Psoas muscle (tissue), 8 donors: ENCODE measurements at regions of chr6 and their contacts with region 1.

Region 1: GRCh38 chr6:70706491-70707123 is 38.9 kb downstream of the SMAP1 start:
- DNase-seq: no peak
- ATAC-seq: peak in 1 of 4 donors; percentile 58
- H3K4me3 ChIP-seq: no peak overlapping the region
- H3K27ac ChIP-seq: no peak overlapping the region
- H3K4me1 ChIP-seq: peaks cover 12% of the 10 kb centered on the region
- H3K27me3 ChIP-seq: no peaks in the 10 kb centered on the region
- CTCF ChIP-seq: peak; percentile 74

Region 2: GRCh38 chr6:70753870-70754380 is 47.3 kb after region 1 on chr6:
- intact Hi-C with region 1: no loop called
- DNase-seq: no peak
- ATAC-seq: no peak
- H3K4me3 ChIP-seq: no peak overlapping the region
- H3K27ac ChIP-seq: no peak overlapping the region
- H3K4me1 ChIP-seq: no peaks in the 10 kb centered on the region
- H3K27me3 ChIP-seq: no peaks in the 10 kb centered on the region
- CTCF ChIP-seq: no peak

Region 3: DNA sequence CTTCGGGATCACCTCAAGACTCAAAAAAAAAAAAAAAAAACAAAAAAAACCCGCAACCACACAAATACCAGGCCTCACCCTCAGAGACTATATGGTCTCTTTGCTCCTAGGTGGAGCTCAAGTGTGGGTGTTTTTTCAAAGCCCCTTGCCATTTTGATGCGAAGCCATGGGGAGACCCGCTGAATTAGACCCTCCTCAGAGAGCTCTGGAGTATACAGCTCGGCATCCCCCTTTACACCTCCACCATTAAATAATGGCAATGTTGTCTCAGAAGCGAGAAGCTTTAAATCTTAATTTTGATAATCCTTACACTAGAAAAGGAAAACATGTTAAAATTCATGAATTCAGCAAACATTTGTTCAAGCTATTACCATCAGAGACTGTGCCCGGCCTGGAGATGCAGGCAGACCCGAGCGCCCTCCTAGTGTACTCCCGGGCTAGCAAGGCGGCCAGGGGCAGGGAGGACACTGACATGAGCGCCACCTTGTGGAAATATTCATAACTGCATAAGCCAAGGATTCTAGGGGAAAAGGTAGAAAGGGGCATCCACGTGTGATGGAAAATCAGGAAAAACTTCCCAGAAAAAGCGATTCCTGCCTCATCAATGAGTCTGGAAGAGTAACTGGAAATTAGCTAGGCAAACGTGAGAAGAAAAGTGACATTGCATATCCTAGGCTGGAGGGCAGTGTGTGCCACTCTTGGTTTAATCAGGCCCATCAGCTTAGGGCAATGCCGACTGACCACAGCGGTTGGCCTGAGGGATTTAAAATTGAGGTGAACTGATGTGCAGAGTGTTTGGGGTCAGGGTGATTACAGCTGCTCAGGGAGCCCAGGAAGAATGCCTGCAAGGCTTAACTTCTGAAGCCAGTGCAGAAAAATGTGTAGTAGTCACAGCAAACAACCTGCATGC is 177.7 kb after region 1 on chr6:
- intact Hi-C with region 1: loop called (anchors 2 kb)
- DNase-seq: peak; percentile 40 to 68
- ATAC-seq: peak; percentile 78 to 92 (median 89)
- H3K4me3 ChIP-seq: no peak overlapping the region
- H3K27ac ChIP-seq: no peak overlapping the region
- H3K4me1 ChIP-seq: peaks cover 7% of the 10 kb centered on the region
- H3K27me3 ChIP-seq: no peaks in the 10 kb centered on the region
- CTCF ChIP-seq: peak; percentile 95

Region 4: DNA sequence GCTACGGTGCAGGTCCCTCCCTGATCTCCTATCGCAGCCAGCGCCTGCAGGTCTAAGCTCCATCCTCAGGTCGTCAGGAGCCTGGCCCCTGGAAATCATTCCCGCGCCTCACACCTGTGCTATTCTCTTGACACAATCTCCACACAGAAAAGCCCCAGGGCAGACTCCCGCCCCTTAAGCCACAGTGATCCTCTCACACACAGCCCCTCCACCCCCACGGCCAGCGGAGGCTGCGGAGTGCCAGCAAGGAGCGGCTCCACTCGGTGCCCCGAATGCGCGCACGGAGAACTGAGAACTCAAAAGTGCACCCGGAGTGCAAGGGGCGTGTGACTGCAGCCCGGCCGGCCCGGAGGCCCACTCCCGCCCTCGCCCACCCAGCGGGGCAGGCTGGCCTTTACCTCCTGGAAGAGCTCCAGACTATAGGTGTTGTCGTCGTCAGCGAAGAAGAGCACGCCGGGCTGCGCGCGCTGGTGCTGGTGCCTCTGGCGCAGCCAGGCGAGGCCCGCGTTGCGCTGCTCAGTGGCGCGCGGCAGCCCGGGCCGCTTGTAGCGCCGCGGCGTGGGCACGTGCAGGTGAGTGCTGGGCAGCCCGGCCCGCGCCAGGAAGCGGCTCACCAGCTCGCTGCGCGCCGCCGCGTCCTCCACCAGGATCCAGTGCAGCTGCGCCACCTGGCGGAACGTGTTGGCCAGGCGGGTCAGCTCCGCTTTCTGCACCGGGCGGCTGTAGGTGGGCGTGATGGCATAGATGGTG is 249.0 kb after region 1 on chr6:
- intact Hi-C with region 1: loop called in 1 of 2 experiments (anchors 5 kb)
- DNase-seq: peak; percentile 84 to 90
- ATAC-seq: peak; percentile 95 to 98 (median 97)
- H3K4me3 ChIP-seq: peak overlapping the region; percentile 72
- H3K27ac ChIP-seq: no peak overlapping the region
- H3K4me1 ChIP-seq: no peaks in the 10 kb centered on the region
- H3K27me3 ChIP-seq: peaks cover 0 to 44% (median 13%) of the 10 kb centered on the region in 3 donors
- CTCF ChIP-seq: peak; percentile 88